T-cell (primary cell): ENCODE measurements at regions of chr9 and their contacts with region 1.

Region 1: GRCh38 chr9:130072515-130073229 is 19.0 kb downstream of the GPR107 start:
- DNase-seq: no peak
- ATAC-seq: no peak
- H3K4me3 ChIP-seq: no peak overlapping the region
- H3K4me3 Mint-ChIP-seq: no peak overlapping the region
- H3K27ac ChIP-seq: no peak overlapping the region
- H3K27ac Mint-ChIP-seq: no peak overlapping the region
- H3K4me1 ChIP-seq: peaks cover 4 to 8% of the 10 kb centered on the region in 2 experiments
- H3K4me1 Mint-ChIP-seq: peaks cover 16 to 37% (median 31%) of the 10 kb centered on the region in 3 donors
- H3K27me3 ChIP-seq: no peaks in the 10 kb centered on the region
- H3K27me3 Mint-ChIP-seq: no peaks in the 10 kb centered on the region

Region 2: DNA sequence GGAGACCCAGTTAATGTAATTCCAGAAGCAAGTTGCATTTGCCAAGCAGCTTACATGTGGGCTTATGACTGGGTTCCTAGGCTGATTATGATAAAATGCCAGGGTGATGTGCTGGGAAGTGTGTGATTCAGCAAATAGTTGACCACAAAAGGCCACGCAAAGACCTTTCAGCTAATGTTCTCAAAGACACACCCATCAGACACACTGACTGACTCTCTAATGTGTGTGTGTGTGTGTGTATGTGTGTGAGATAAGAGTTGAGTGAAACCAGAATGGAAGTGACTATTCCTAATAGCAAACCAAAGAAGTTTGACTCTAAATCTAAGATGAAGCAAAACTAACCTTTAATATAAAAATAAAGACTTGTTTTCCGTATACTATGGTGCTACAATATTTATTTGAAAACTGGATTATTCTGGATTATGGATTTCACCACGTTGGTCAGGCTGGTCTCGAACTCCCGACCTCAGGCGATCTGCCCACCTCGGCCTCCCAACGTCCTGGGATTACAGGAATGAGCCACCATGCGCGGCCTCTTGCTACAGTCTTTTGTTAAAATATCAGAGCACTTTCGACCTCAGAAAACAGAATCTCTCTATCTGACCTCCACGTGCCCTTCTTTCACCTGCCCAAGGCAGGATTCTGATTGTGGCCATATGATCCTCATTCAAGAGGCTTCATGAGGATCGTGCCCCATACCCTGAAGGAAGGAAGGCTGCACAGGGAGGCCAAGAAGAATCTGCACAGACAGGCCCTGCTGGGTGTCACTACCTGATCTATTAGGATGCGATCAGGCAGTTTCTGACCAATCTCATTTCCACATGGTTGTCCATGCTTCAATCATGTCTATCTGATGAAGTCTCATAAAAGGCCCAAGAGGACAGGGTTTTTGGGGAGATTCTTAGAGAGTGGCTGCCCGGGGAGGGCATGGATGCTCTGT is 161.8 kb before region 1 on chr9:
- CTCF ChIA-PET with region 1: interaction called, 3 to 12 read pairs
- POLR2A ChIA-PET with region 1: interaction called in 1 of 2 experiments, 3 read pairs
- DNase-seq: no peak
- ATAC-seq: no peak
- H3K4me3 ChIP-seq: no peak overlapping the region
- H3K4me3 Mint-ChIP-seq: no peak overlapping the region
- H3K27ac ChIP-seq: no peak overlapping the region
- H3K27ac Mint-ChIP-seq: peak overlapping the region; percentile 69 to 85
- H3K4me1 ChIP-seq: peaks cover 0 to 5% of the 10 kb centered on the region in 2 experiments
- H3K4me1 Mint-ChIP-seq: peaks cover 10 to 20% (median 17%) of the 10 kb centered on the region in 3 donors
- H3K27me3 ChIP-seq: no peaks in the 10 kb centered on the region
- H3K27me3 Mint-ChIP-seq: no peaks in the 10 kb centered on the region

Region 3: DNA sequence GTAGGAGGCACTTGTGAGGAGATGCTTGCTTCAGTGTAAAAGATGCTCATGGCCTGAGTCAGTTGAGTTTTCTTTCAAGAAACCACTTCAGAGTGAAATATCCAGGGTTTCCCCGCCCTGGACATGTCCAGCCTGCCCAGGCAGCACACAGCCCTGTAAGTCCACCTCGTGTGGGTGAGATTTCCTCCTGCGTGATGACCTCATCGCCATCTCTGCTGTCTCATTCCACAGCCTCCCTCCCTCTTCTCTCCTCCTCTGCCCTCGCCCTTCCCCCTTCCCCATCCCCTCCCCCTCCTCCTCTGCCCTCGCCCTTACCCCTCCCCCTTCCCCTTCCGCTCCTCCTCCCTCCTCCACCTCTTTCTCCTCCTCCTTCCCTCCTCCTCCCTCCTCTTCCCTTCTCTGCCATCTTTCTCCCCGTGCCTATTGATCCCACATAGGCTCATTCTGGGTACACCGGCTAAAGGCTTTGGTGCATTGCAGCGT is 65.5 kb after region 1 on chr9:
- CTCF ChIA-PET with region 1: no interaction called
- POLR2A ChIA-PET with region 1: no interaction called
- DNase-seq: no peak
- ATAC-seq: no peak
- H3K4me3 ChIP-seq: no peak overlapping the region
- H3K4me3 Mint-ChIP-seq: peak overlapping the region in 1 of 3 donors; percentile 55
- H3K27ac ChIP-seq: no peak overlapping the region
- H3K27ac Mint-ChIP-seq: no peak overlapping the region
- H3K4me1 ChIP-seq: peaks cover 14 to 39% of the 10 kb centered on the region in 2 experiments
- H3K4me1 Mint-ChIP-seq: peaks cover 27 to 43% (median 40%) of the 10 kb centered on the region in 3 donors
- H3K27me3 ChIP-seq: peaks cover 0 to 11% of the 10 kb centered on the region in 2 experiments
- H3K27me3 Mint-ChIP-seq: no peaks in the 10 kb centered on the region